Posterior vena cava (tissue), 2 donors: ENCODE measurements at regions of chr17 and their contacts with region 1.

Region 1: GRCh38 chr17:65345261-65346005 is 208.3 kb downstream of the RGS9 start:
- DNase-seq: no peak

Region 2: GRCh38 chr17:65208717-65209116 is 136.7 kb before region 1 on chr17:
- intact Hi-C with region 1: no loop called
- DNase-seq: no peak

Region 3: GRCh38 chr17:65407017-65407416 is 61.6 kb after region 1 on chr17:
- intact Hi-C with region 1: loop called in 1 of 2 experiments (anchors 2 kb)
- DNase-seq: no peak

Region 4: GRCh38 chr17:66107731-66108130 is 762.3 kb after region 1 on chr17:
- intact Hi-C with region 1: no loop called
- DNase-seq: no peak